ENCODE measurements at regions of chr1 and their contacts with region 1.

Region 1: GRCh38 chr1:44036409-44037139 is 5.3 kb upstream of the SLC6A9 start:
- DNase-seq: peak; percentile 77
- ATAC-seq: peak; percentile 83
- H3K4me3 ChIP-seq: no peak overlapping the region
- H3K4me3 Mint-ChIP-seq: no peak overlapping the region
- H3K27ac ChIP-seq: no peak overlapping the region
- H3K27ac Mint-ChIP-seq: no peak overlapping the region
- H3K4me1 ChIP-seq: peaks cover 0 to under 1% of the 10 kb centered on the region in 2 donors
- H3K4me1 Mint-ChIP-seq: peaks cover under 1% of the 10 kb centered on the region
- H3K27me3 ChIP-seq: no peaks in the 10 kb centered on the region
- H3K27me3 Mint-ChIP-seq: no peaks in the 10 kb centered on the region
- CTCF ChIP-seq: peak; percentile 88

Region 2: GRCh38 chr1:43763497-43763973 is 273.0 kb before region 1 on chr1:
- CTCF ChIA-PET with region 1: interaction called, 40 read pairs
- POLR2A ChIA-PET with region 1: no interaction called
- intact Hi-C with region 1: no loop called
- DNase-seq: peak; percentile 66
- ATAC-seq: peak; percentile 60
- H3K4me3 ChIP-seq: no peak overlapping the region
- H3K4me3 Mint-ChIP-seq: no peak overlapping the region
- H3K27ac ChIP-seq: no peak overlapping the region
- H3K27ac Mint-ChIP-seq: no peak overlapping the region
- H3K4me1 ChIP-seq: no peaks in the 10 kb centered on the region
- H3K4me1 Mint-ChIP-seq: peaks cover 2% of the 10 kb centered on the region
- H3K27me3 ChIP-seq: no peaks in the 10 kb centered on the region
- H3K27me3 Mint-ChIP-seq: no peaks in the 10 kb centered on the region
- CTCF ChIP-seq: peak; percentile 77

Region 3: DNA sequence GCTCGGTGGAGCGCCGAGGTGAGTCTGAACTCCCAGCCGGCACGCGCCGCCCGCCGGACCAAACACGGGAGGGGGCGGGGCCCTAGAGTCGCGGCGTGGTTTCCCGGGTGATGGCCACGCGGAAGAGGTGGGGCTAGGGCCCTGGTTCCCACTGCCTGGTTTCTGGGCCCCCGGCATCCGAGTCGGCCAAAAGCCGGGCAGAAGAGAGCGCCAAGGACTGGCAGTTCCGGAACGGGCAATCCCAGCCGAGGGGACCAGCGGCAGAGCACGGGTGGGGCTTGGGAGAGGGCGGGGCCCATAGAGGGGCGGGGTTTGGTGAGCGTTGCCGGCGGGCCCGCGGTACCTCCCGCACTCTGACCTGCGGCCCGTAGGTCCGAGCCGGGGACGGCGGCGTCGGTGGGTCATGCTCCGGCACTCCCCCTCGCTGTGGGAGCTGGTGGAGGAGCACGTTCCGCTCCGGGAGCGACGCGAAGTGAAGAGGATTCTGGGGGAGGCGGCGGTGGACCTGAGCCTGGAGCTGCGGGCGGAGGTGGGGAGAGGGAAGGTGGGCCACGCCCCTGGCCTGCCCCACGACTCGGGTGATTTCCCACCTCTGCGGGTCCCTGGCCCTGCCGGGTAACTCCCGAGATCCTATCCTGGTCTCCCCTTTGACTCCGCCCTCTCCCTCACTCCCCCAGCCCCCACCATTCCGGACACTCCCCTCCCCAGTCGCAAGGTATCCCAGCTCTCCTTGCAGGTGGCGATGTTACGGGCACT is 44.9 kb before region 1 on chr1 and contains the start of gene CCDC24:
- CTCF ChIA-PET with region 1: interaction called, 15 read pairs
- POLR2A ChIA-PET with region 1: interaction called, 3 read pairs
- intact Hi-C with region 1: no loop called
- DNase-seq: peak; percentile 84
- ATAC-seq: peak; percentile 89
- H3K4me3 ChIP-seq: peak within 1 kb of the TSS; percentile 11 to 81 (median 72)
- H3K4me3 Mint-ChIP-seq: peak within 1 kb of the TSS; percentile 96
- H3K27ac ChIP-seq: peak within 1 kb of the TSS in 1 of 2 donors; percentile 75
- H3K27ac Mint-ChIP-seq: peak within 1 kb of the TSS; percentile 91
- H3K4me1 ChIP-seq: peaks cover 22 to 44% of the 10 kb centered on the region in 2 donors
- H3K4me1 Mint-ChIP-seq: peaks cover 38% of the 10 kb centered on the region
- H3K27me3 ChIP-seq: no peaks in the 10 kb centered on the region
- H3K27me3 Mint-ChIP-seq: no peaks in the 10 kb centered on the region
- CTCF ChIP-seq: no peak
- total RNA-seq, gene CCDC24: 18.0 and 18.4 TPM in 2 replicates

Region 4: GRCh38 chr1:44012941-44013609 is 23.5 kb before region 1 on chr1:
- CTCF ChIA-PET with region 1: interaction called, 227 read pairs
- POLR2A ChIA-PET with region 1: no interaction called
- intact Hi-C with region 1: no loop called
- DNase-seq: no peak
- ATAC-seq: no peak
- H3K4me3 ChIP-seq: no peak overlapping the region
- H3K4me3 Mint-ChIP-seq: no peak overlapping the region
- H3K27ac ChIP-seq: no peak overlapping the region
- H3K27ac Mint-ChIP-seq: no peak overlapping the region
- H3K4me1 ChIP-seq: no peaks in the 10 kb centered on the region
- H3K4me1 Mint-ChIP-seq: no peaks in the 10 kb centered on the region
- H3K27me3 ChIP-seq: no peaks in the 10 kb centered on the region
- H3K27me3 Mint-ChIP-seq: peaks cover 9% of the 10 kb centered on the region
- CTCF ChIP-seq: no peak

Measured in B cell (primary cell).